ENCODE measurements at regions of chr2 and their contacts with region 1.

Region 1: GRCh38 chr2:72887754-72888437 is 688 bp downstream of the SPR start:
- DNase-seq: peak; percentile 85 to 93
- ATAC-seq: peak; percentile 70 to 79
- H3K4me3 ChIP-seq: peak overlapping the region; percentile 77
- H3K27ac ChIP-seq: peak overlapping the region; percentile 92 to 96
- H3K4me1 ChIP-seq: peaks cover 22% of the 10 kb centered on the region
- CTCF ChIP-seq: peak; percentile 96
- EP300 ChIP-seq: no peak
- POLR2A ChIP-seq: peak; percentile 38; the same call in 1 of the 2 replicates
- RAD21 ChIP-seq: peak; percentile 56 to 75

Region 2: DNA sequence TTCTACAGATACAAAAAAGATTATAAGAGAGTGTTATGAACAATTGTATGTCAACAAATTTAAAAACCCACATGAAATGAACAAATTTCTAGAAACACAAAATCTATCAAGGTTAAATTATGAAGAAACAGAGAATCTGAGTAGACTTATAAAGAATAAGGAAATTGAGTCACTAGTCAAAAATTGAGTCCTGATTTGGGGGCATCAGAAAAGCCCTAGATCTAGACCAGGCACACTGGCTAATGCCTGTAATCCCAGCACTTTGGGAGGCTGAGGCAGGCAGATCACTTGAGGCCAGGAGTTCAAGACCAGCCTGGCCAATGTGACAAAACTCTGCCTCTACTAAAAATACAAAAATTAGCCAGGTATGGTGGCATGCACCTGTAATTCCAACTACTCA is 16.0 kb before region 1 on chr2:
- CTCF ChIA-PET with region 1: interaction called, 20 read pairs
- POLR2A ChIA-PET with region 1: no interaction called
- DNase-seq: no peak
- ATAC-seq: no peak
- H3K4me3 ChIP-seq: no peak overlapping the region
- H3K27ac ChIP-seq: no peak overlapping the region
- H3K4me1 ChIP-seq: no peaks in the 10 kb centered on the region
- CTCF ChIP-seq: no peak
- EP300 ChIP-seq: no peak
- POLR2A ChIP-seq: no peak
- RAD21 ChIP-seq: no peak

Region 3: DNA sequence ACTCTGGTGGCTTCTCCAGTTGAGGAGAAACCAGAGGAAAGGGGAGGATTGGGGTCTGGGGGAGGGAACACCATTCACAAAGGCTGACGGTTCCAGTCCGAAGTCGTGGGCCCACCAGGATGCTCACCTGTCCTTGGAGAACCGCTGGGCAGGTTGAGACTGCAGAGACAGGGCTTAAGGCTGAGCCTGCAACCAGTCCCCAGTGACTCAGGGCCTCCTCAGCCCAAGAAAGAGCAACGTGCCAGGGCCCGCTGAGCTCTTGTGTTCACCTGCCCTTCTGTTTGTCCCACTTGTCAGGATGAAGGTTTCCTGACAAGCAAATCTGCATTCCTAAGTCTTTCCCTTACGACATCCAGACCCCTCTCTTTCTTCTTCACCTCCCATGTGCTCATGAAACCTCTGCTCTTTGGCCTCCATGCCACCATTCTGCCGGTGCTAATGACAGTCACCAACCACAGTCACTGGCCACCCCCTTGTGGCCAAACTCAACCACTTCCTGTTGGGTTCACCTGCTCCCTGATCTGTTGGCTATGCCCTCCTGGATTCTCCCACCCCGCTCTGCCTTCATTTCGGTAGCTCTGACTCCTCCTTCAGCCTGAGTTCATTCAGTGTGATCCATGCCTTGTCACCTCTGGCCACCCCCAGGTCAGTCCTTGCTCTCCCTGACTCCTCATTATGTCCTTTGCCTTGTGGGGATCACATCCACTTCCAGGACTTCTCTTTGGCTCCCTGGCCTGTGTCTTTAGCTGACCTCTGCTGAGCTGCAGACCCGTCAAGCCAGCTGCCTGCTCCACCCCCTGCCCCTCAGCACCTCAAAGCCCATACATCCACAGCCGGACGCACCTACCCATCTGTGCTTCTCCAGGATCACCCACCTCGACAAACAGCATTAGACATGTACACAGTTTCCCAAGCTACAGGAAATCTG is 47.1 kb after region 1 on chr2:
- CTCF ChIA-PET with region 1: interaction called, 85 read pairs
- POLR2A ChIA-PET with region 1: no interaction called
- DNase-seq: peak; percentile 59 to 60
- ATAC-seq: peak; percentile 17 to 68; a peak in 3 of 6 replicates
- H3K4me3 ChIP-seq: no peak overlapping the region
- H3K27ac ChIP-seq: no peak overlapping the region
- H3K4me1 ChIP-seq: no peaks in the 10 kb centered on the region
- CTCF ChIP-seq: peak; percentile 36; the same call in 2 of the 3 replicates
- EP300 ChIP-seq: no peak
- POLR2A ChIP-seq: no peak
- RAD21 ChIP-seq: peak; percentile 41 to 70

Region 4: GRCh38 chr2:72973566-72974435 is 85.9 kb after region 1 on chr2:
- CTCF ChIA-PET with region 1: interaction called, 208 read pairs
- POLR2A ChIA-PET with region 1: no interaction called
- DNase-seq: peak; percentile 67 to 89
- ATAC-seq: peak; percentile 91 to 97
- H3K4me3 ChIP-seq: no peak overlapping the region
- H3K27ac ChIP-seq: no peak overlapping the region
- H3K4me1 ChIP-seq: no peaks in the 10 kb centered on the region
- CTCF ChIP-seq: peak; percentile 85
- EP300 ChIP-seq: no peak
- POLR2A ChIP-seq: no peak
- RAD21 ChIP-seq: peak; percentile 66 to 67

Region 5: DNA sequence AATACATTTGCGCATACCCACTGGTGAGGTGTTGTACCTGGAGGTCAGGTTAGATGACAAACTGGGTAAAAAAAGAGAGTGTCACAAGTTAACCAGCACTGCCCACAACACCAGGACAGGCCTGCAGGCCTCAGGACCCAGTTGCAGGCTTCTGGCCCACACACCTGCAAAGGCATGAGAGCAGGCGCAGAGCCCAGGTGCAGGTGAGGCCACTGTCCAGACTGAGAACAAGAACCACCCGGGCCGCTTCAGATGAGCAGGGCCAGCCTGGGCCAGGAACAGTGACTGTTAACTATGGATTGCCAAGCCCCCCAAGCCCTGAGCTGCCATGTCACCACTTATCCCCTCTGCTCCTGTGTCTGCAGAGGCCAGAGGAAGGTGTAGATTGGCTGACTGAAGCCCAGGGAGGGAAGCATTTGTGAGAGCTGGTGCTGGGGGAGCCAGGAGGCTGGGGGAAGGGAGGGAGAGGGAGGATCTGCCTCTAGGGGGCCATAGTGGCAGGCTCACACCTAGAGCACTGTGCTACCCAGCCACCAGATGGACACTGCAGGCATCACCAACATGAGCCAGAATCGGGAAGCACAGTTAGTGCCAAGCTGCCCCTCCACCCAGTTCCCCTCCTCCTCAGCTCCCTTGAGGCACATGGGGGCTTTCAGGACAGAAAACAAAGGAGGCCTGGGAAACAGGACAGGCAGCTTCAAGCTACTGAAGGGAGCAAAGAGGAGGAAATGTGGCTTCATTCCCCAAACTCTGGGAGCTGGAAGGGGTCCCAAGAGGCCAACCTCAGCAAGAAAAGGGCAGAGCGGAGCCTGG is 148.2 kb after region 1 on chr2:
- CTCF ChIA-PET with region 1: interaction called, 13 read pairs
- POLR2A ChIA-PET with region 1: no interaction called
- DNase-seq: peak in 1 of 2 experiments; percentile 27
- ATAC-seq: peak; percentile 58 to 85; a peak in 5 of 6 replicates
- H3K4me3 ChIP-seq: no peak overlapping the region
- H3K27ac ChIP-seq: peak overlapping the region; percentile 22 to 65; a peak in 4 of 6 replicates
- H3K4me1 ChIP-seq: peaks cover 57% of the 10 kb centered on the region
- CTCF ChIP-seq: no peak
- EP300 ChIP-seq: no peak
- POLR2A ChIP-seq: no peak
- RAD21 ChIP-seq: peak in 1 of 2 experiments; percentile 16; a peak in 1 of 5 replicates

Region 6: GRCh38 chr2:73156539-73157124 is 268.7 kb after region 1 on chr2:
- CTCF ChIA-PET with region 1: interaction called, 260 read pairs
- POLR2A ChIA-PET with region 1: no interaction called
- DNase-seq: peak; percentile 58 to 69
- ATAC-seq: peak; percentile 96 to 98
- H3K4me3 ChIP-seq: 0 out of 3 replicates have a peak overlapping the region, but pooled peaks have one; percentile 5
- H3K27ac ChIP-seq: peak overlapping the region in 1 of 2 experiments; percentile 65; a peak in 2 of 6 replicates
- H3K4me1 ChIP-seq: peaks cover 4% of the 10 kb centered on the region; the same call in 1 of the 3 replicates
- CTCF ChIP-seq: peak; percentile 93
- EP300 ChIP-seq: no peak
- POLR2A ChIP-seq: no peak
- RAD21 ChIP-seq: peak; percentile 96 to 97

Region 7: DNA sequence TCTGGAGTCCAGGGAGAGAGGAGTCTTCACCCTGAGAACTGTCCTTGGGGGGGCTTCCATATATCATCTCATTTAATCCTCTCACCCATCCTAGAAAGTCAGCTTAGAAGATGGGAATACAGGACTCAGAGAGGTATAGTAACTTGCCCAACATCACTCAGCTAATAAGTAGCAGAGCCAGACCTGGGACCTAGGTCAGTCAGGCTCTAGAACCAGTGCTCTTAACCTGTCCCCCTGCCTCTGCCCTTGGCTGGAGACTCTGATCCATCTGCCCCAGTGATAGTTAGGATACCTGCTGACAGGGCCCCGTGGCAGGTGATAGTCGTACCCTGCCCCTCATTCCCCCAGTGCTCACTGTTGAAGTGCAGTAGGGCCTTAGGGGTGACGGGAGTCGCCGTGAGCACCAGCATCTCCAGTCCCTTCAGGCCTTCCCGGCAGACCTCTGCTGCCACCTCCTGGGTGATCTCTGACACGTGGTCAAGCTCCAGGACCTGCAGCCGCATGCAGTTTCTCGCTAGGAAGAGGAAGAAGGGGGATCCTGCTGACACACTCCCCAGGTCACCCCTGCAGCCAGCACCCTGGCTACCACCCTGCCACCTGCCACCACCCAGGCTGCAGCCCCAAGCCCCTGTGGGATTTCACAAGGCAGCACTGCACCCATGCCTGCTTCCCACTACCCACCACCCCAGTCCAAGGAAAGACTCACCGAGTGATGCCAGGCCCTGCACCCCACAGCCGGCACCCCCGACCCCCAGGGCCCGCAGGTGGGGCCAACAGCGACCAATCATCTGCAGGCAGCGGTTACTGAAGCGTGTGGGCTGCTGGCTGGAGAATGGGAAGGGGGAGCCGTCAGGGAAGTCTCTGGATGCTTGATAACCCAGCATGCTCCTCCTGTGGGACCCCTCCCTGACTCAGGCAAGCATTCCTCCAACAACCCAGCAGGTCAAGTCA is 372.4 kb after region 1 on chr2:
- CTCF ChIA-PET with region 1: interaction called, 12 read pairs
- POLR2A ChIA-PET with region 1: no interaction called
- DNase-seq: peak; percentile 76 to 84
- ATAC-seq: peak; percentile 69 to 84
- H3K4me3 ChIP-seq: no peak overlapping the region
- H3K27ac ChIP-seq: no peak overlapping the region
- H3K4me1 ChIP-seq: no peaks in the 10 kb centered on the region
- CTCF ChIP-seq: peak; percentile 61
- EP300 ChIP-seq: no peak
- POLR2A ChIP-seq: no peak
- RAD21 ChIP-seq: peak; percentile 61 to 68